ENCODE measurements at regions of chr17 and their contacts with region 1.

Region 1: GRCh38 chr17:48724251-48725003 is 1.4 kb downstream of the PRAC2 start:
- DNase-seq: peak; percentile 95
- H3K4me3 ChIP-seq: no peak overlapping the region
- H3K27ac ChIP-seq: no peak overlapping the region
- H3K4me1 ChIP-seq: peaks cover 23% of the 10 kb centered on the region
- H3K27me3 ChIP-seq: no peaks in the 10 kb centered on the region
- CTCF ChIP-seq: peak; percentile 60 to 71 (median 68)
- POLR2A ChIP-seq: no peak

Region 2: GRCh38 chr17:48603959-48604769 is 120.3 kb before region 1 on chr17:
- intact Hi-C with region 1: no loop called
- DNase-seq: no peak
- H3K4me3 ChIP-seq: no peak overlapping the region
- H3K27ac ChIP-seq: no peak overlapping the region
- H3K4me1 ChIP-seq: peaks cover 4% of the 10 kb centered on the region
- H3K27me3 ChIP-seq: peaks cover 7% of the 10 kb centered on the region
- CTCF ChIP-seq: no peak
- POLR2A ChIP-seq: no peak

Region 3: DNA sequence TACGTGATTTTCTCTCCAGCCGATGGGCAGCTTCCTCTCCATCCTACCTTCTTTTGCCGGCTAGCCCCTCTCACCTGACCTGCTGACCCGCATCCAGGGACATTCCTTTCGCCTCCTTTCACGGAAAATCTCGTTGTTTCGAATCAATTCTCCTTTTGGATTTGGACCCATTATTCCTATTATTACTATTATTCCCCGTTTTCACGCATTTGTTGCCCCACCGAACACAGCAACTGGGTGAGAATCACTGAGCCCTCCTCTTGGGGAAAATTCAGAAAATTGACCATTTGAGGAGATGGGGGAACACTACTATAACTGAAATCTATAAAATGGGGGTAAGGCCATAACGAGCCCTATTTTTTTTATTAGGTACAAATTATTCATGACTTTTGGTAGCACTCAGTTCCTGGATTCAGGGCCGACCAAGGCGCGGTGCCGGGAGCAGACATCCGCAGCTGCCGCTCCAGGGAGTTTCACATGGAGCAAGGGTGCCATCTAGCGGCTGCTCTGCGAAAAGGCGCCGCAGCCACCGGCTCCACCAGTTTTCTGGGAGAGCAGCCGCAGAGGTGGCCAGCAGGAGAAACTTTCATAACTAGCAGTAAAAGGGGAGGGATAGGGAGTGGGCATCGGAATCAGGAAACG is 106.0 kb before region 1 on chr17:
- intact Hi-C with region 1: no loop called
- DNase-seq: peak; percentile 92
- H3K4me3 ChIP-seq: no peak overlapping the region
- H3K27ac ChIP-seq: no peak overlapping the region
- H3K4me1 ChIP-seq: no peaks in the 10 kb centered on the region
- H3K27me3 ChIP-seq: peaks cover 9% of the 10 kb centered on the region
- CTCF ChIP-seq: peak; percentile 93 to 96 (median 93)
- POLR2A ChIP-seq: no peak

Region 4: DNA sequence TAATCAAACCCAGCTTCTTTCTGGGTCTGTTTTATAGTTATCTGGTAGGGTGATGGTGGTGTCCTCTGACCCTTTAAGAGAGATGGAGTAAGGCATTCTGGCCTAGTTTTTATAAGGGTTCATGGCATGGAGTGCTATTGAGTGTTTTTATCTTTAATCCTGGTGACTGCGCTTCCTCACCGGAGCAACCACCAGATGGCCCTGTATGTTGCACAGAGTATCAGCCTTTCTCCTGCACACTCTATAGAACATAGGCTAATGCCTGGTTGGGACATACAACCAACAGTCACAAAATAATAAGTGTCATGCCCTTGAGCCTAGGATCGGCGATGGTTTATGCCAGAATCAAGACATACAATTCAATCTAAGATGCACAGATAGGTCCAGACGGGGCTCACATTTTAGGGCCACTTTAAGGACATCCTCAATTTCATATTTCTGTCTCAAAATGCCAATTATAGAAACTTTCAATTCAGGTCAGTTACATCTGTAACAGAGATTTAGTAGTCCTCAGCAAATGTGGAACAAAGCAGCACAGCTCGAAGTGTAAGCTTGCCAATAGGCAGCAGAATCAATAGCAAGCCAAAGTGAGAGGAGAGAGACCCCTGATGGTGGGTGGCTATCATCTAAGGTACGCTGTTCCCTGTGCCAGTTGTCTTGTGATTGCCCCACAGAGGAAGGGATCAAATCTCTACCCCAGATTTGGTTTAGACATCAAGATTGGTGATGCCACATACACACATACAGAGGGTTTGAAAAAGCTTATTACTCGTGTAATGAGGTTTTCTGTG is 61.1 kb before region 1 on chr17:
- intact Hi-C with region 1: no loop called
- DNase-seq: no peak
- H3K4me3 ChIP-seq: no peak overlapping the region
- H3K27ac ChIP-seq: no peak overlapping the region
- H3K4me1 ChIP-seq: no peaks in the 10 kb centered on the region
- H3K27me3 ChIP-seq: no peaks in the 10 kb centered on the region
- CTCF ChIP-seq: no peak
- POLR2A ChIP-seq: no peak

Region 5: GRCh38 chr17:48791128-48792032 is 67.0 kb after region 1 on chr17:
- intact Hi-C with region 1: loop called (anchors 10 kb)
- DNase-seq: peak; percentile 91
- H3K4me3 ChIP-seq: no peak overlapping the region
- H3K27ac ChIP-seq: no peak overlapping the region
- H3K4me1 ChIP-seq: no peaks in the 10 kb centered on the region
- H3K27me3 ChIP-seq: no peaks in the 10 kb centered on the region
- CTCF ChIP-seq: peak; percentile 66 to 74 (median 68)
- POLR2A ChIP-seq: no peak

Region 6: DNA sequence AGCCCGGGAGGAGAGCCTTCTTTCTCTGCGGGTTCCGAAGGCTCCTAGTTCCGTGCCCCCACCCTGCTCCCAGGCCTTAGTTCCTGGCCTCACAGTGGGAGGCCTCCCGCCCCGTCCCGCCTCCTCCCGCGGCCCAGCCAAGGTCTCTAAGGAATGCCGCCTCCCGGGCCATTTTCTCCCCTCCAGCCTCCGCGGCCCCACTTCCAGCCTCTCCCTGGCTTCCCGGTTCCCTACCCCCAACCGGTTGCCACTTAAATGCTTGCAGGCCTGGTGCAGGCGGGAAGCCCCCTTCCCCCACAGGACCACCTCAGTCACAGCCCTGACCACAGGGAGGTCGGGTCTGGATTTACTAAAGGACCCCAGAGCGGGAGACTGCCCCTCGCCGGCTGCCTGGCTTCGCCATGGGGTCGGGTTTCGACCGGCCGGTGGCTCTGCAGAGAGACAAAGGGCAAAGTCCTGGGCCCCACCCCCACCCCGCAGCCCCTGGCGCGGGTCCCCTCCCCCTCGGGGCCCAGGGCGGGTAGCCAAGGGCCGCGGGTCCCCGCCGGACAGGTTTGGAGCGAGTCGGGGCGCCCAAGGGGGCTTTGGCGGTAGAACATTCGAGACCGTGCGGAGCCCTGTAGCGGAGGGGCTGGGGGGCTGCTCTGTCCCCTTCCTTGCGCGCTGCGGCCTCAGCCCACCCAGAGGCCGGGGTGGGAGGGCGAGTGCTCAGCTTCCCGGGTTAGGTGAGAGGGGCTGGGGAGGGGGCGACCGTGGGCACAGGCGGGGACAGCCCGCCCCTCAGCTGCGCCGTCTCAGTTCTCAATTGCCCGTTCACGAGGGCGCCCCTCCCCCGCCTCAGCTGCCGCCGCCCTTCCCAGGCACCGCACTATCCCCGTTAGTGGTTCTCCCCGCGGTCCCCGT is 289.1 kb after region 1 on chr17:
- intact Hi-C with region 1: no loop called
- DNase-seq: peak; percentile 40
- H3K4me3 ChIP-seq: peak overlapping the region; percentile 40 to 52
- H3K27ac ChIP-seq: peak overlapping the region; percentile 24 to 56
- H3K4me1 ChIP-seq: no peaks in the 10 kb centered on the region
- H3K27me3 ChIP-seq: no peaks in the 10 kb centered on the region
- CTCF ChIP-seq: no peak
- POLR2A ChIP-seq: no peak